ENCODE measurements at regions of chr11 and their contacts with region 1.

Region 1: GRCh38 chr11:47552566-47553416 is at the start of gene CELF1:
- DNase-seq: peak; percentile 92
- ATAC-seq: peak; percentile 95
- H3K4me3 Mint-ChIP-seq: peak within 1 kb of the TSS; percentile 95
- H3K27ac Mint-ChIP-seq: peak within 1 kb of the TSS; percentile 96
- H3K4me1 Mint-ChIP-seq: peaks cover 35% of the 10 kb centered on the region
- H3K27me3 Mint-ChIP-seq: no peaks in the 10 kb centered on the region
- CTCF ChIP-seq: peak; percentile 90
- total RNA-seq, gene CELF1: 160 to 177 TPM (median 169 TPM) in 3 replicates

Region 2: DNA sequence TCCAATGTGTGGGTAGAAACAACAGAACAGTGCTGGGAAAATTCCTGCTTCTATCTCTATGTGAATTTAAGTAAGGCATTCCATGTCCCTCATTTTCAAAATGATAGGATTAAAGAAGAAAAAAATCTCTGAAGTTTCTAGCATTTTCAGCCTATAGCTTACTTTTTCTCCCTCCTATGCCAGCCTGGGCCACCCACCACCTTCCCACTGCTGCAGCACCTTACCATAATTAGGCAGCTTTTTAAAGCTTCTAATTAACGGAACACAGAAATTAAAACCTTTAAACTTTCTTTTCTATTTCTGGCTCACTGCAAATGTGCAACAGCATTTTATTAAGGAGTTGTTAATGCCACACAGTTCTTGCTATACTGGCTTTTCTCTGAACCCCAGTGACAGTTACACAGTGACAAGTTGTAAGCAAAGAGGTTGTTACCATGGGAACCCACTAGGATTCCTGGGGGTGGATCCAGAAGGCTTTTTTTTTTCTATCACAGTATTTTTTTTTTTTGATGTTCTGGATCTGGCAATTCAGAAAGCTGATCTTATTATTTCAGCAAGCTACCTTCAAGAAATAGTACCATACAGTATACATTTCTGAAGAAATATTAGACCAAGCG is 20.1 kb before region 1 on chr11:
- CTCF ChIA-PET with region 1: interaction called, 10 read pairs
- POLR2A ChIA-PET with region 1: no interaction called
- DNase-seq: no peak
- ATAC-seq: no peak
- H3K4me3 Mint-ChIP-seq: no peak overlapping the region
- H3K27ac Mint-ChIP-seq: no peak overlapping the region
- H3K4me1 Mint-ChIP-seq: peaks cover 13% of the 10 kb centered on the region; the same call in 1 of the 2 replicates
- H3K27me3 Mint-ChIP-seq: no peaks in the 10 kb centered on the region
- CTCF ChIP-seq: no peak

Region 3: DNA sequence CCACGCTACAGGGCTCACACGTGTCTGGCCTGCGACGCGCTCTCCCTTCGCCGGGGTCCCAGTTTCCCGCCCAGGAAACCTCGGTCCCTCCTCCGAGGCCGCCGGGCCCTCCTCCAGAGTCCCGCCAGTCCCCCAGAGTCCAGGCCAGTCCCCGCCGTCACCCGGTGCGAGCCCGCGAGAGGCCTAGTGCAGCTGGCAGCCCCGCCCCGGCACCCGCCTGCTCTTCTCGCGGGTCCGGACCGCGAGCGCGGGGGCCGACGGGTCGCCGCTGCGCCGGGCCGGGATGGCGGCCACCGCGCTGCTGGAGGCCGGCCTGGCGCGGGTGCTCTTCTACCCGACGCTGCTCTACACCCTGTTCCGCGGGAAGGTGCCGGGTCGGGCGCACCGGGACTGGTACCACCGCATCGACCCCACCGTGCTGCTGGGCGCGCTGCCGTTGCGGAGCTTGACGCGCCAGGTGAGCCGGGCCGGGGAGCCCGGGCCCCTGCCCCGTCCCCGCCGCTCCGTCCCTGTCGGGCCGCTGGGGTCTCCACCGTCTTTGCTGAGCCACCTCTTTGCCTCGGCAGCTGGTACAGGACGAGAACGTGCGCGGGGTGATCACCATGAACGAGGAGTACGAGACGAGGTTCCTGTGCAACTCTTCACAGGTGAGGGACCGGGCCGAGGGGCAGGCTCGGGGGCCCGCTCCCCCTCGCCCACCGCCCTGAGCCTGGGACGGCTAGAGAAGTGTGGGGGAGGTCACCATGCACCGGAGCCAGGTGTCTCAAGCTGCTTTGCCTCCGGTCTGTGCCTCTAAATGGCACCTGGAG is 12.8 kb after region 1 on chr11 and contains the start of gene PTPMT1:
- CTCF ChIA-PET with region 1: interaction called, 13 read pairs
- POLR2A ChIA-PET with region 1: interaction called, 3 read pairs
- DNase-seq: peak; percentile 78
- ATAC-seq: peak; percentile 91
- H3K4me3 Mint-ChIP-seq: peak within 1 kb of the TSS; percentile 84
- H3K27ac Mint-ChIP-seq: no peak within 1 kb of the TSS
- H3K4me1 Mint-ChIP-seq: peaks cover 10% of the 10 kb centered on the region
- H3K27me3 Mint-ChIP-seq: no peaks in the 10 kb centered on the region
- CTCF ChIP-seq: no peak
- total RNA-seq, gene PTPMT1: 49.5 to 69.4 TPM (median 65.4 TPM) in 3 replicates